Adrenal gland (tissue), 19 donors: ENCODE measurements at regions of chr15 and their contacts with region 1.

Region 1: GRCh38 chr15:92077353-92078085 is 224.0 kb downstream of the SLCO3A1 start:
- DNase-seq: peak; percentile 75 to 92 (median 82)
- H3K4me3 ChIP-seq: no peak overlapping the region
- H3K27ac ChIP-seq: no peak overlapping the region
- H3K4me1 ChIP-seq: peaks cover under 1 to 14% of the 10 kb centered on the region in 2 donors
- H3K27me3 ChIP-seq: no peaks in the 10 kb centered on the region
- CTCF ChIP-seq: peak; percentile 59 to 90 (median 84)
- POLR2A ChIP-seq: no peak

Region 2: DNA sequence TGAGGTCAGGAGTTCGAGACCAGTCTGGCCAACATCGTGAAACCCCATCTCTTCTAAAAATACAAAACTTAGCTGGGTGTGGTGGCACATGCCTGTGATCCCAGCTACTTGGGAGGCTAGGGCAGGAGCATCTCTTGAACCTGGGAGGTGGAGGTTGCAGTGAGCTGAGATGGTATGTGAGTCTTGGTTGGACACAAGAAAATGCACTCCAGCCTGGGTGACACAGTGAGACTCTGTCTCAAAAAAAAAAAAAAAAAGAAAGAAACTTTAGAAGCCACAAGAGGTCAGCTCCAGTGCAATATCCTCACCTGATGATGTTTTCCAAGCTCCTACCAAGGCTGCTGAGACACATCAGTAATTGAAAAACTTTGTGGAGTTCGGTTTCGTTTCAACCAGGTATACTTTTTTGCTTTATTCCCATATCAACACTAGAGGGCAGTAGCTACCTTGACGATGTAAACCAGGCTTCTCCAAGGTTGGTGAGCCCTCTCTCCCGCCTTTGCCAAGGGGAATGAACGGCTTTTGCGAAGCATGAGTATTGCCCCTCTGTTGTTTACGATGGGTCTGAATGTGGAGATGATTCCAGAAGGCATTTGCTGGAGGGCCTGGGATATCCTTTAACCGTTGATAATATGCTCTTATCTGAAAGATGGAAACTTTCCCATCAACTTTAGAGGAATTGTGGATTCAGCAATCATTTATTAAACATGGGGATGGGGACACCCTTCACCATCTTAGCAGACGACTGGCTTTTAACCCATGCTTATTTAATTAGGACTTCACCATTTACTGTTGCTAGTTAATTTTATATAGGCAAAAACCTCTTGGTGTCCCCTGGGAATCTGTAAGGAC is 774.7 kb before region 1 on chr15:
- intact Hi-C with region 1: loop called (anchors 5 to 10 kb)
- DNase-seq: peak in 6 of 7 donors; percentile 34 to 58 (median 45)
- H3K4me3 ChIP-seq: no peak overlapping the region
- H3K27ac ChIP-seq: no peak overlapping the region
- H3K4me1 ChIP-seq: no peaks in the 10 kb centered on the region
- H3K27me3 ChIP-seq: peaks cover 7% of the 10 kb centered on the region
- CTCF ChIP-seq: peak; percentile 48 to 84 (median 77)
- POLR2A ChIP-seq: no peak

Region 3: DNA sequence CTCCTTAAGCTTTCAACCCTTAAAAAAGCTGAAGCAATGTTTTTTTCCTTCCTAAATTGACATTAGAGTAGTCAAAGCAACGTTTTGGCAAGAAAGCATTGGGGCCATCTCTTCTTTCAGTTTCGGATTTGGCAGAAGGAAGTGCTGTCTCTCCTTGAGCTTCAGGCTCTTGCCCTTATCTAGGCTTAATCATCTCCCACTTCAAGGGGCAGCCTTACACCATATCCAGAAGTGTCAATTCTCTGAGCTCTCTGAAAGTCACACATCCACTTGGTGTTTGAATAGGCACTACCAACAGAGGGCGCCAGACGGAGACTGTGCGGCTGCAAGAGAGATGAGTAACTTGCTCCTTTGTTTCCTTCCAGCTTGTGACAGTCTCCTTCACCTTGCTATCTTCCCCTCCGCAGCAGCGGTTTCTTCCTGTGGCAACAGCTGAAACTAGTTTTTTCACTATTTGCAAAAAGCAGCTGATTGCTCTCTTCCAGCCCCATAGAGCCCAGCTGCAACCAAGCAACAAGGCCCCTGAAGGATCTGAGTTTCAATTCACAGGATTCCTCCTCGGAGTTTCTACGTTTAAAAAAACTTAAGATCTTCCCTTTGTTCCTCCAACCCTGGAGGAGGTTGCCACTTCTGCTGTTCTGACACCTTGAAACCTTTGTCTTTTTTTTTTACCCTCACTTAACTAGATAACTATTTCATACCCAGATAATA is 371.0 kb before region 1 on chr15:
- intact Hi-C with region 1: loop called (anchors 5 kb)
- DNase-seq: peak; percentile 80 to 94 (median 86)
- H3K4me3 ChIP-seq: no peak overlapping the region
- H3K27ac ChIP-seq: no peak overlapping the region
- H3K4me1 ChIP-seq: peaks cover 0 to 6% of the 10 kb centered on the region in 2 donors
- H3K27me3 ChIP-seq: no peaks in the 10 kb centered on the region
- CTCF ChIP-seq: peak; percentile 89 to 95 (median 92)
- POLR2A ChIP-seq: no peak

Region 4: GRCh38 chr15:91852741-91853510 is 224.6 kb before region 1 on chr15:
- intact Hi-C with region 1: loop called (anchors 2 to 5 kb)
- DNase-seq: peak; percentile 77 to 88 (median 82)
- H3K4me3 ChIP-seq: peak overlapping the region in 3 of 4 donors; percentile 36 to 95 (median 49)
- H3K27ac ChIP-seq: peak overlapping the region; percentile 56 to 95 (median 84)
- H3K4me1 ChIP-seq: peaks cover 10 to 26% of the 10 kb centered on the region in 2 donors
- H3K27me3 ChIP-seq: no peaks in the 10 kb centered on the region
- CTCF ChIP-seq: peak; percentile 39 to 87 (median 78)
- POLR2A ChIP-seq: peak in 1 of 2 donors; percentile 41

Region 5: GRCh38 chr15:91942676-91943576 is 134.6 kb before region 1 on chr15:
- intact Hi-C with region 1: loop called in 1 of 2 experiments (anchors 10 kb)
- DNase-seq: peak; percentile 77 to 94 (median 89)
- H3K4me3 ChIP-seq: no peak overlapping the region
- H3K27ac ChIP-seq: peak overlapping the region in 2 of 5 donors; percentile 27 to 72
- H3K4me1 ChIP-seq: peaks cover 12 to 53% of the 10 kb centered on the region in 2 donors
- H3K27me3 ChIP-seq: no peaks in the 10 kb centered on the region
- CTCF ChIP-seq: no peak
- POLR2A ChIP-seq: no peak